ENCODE measurements at regions of chr14 and their contacts with region 1.

Region 1: GRCh38 chr14:32252030-32252670 is 49.1 kb upstream of the RNU6-8 start:
- DNase-seq: no peak
- H3K4me3 ChIP-seq: no peak overlapping the region
- CTCF ChIP-seq: peak; percentile 74

Region 2: DNA sequence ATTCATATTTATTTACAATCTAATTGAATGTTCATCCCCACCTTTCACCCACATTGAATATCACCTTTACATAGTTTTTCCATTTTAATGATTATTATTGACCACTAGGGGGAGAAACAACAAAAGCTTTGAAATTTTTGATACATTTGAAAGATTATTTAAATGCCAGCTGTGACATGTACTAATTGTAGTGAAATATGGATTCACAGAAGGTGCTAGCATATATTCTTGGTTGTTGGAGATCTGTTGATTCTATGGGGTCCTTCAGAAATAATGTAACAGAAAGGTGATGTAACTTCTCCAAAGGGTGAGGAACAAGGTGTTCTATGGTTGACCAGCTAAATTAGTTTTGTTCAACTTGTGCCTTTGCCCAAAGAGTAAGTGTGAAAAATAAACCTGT is 741.9 kb before region 1 on chr14:
- CTCF ChIA-PET with region 1: interaction called, 36 read pairs
- POLR2A ChIA-PET with region 1: no interaction called
- DNase-seq: no peak
- H3K4me3 ChIP-seq: no peak overlapping the region
- CTCF ChIP-seq: no peak

Region 3: GRCh38 chr14:31937721-31938346 is 314.3 kb before region 1 on chr14:
- CTCF ChIA-PET with region 1: interaction called, 60 read pairs
- POLR2A ChIA-PET with region 1: no interaction called
- DNase-seq: no peak
- H3K4me3 ChIP-seq: no peak overlapping the region
- CTCF ChIP-seq: no peak

Region 4: GRCh38 chr14:32230695-32231280 is 21.4 kb before region 1 on chr14:
- CTCF ChIA-PET with region 1: interaction called, 17 read pairs
- POLR2A ChIA-PET with region 1: no interaction called
- DNase-seq: peak; percentile 70
- H3K4me3 ChIP-seq: no peak overlapping the region
- CTCF ChIP-seq: no peak

Region 5: DNA sequence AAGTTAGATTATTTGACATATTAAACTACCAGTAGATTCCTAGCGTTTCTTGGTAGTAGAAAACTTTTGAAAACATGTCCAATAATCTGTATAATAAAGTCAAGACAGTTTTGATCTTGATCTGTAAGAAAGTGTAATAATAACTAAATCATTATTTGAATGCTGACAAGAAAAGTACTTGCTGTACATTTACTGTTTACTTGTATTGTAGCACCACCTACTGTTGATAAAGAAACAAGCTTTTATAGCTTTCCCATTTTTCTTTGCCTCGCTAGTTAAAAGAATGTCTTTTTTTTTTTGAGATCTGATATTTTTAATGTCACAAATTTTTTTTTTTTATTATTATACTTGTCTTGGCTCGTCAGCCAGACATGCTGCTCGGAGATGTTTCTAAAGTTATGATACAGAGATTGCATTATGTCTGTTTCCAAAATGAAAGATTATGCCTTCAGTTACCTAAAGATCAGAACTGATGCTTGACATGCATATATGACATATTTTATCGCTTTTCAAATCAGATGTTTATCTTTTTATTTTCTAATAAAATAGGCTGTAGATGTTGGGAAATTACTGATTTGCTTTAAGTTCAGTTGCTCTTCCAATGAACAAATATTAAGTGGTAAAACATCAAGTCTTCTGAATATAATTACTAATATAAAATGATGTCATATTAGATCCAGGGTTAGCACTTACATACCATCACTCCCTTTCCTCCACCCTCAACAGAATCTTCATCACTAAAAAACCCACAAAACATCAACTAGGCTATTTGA is 217.4 kb after region 1 on chr14:
- CTCF ChIA-PET with region 1: interaction called, 35 read pairs
- POLR2A ChIA-PET with region 1: no interaction called
- DNase-seq: no peak
- H3K4me3 ChIP-seq: no peak overlapping the region
- CTCF ChIP-seq: peak; percentile 26

Measured in AG04449 (cell line).